ENCODE measurements at regions of chr6 and their contacts with region 1.

Region 1: DNA sequence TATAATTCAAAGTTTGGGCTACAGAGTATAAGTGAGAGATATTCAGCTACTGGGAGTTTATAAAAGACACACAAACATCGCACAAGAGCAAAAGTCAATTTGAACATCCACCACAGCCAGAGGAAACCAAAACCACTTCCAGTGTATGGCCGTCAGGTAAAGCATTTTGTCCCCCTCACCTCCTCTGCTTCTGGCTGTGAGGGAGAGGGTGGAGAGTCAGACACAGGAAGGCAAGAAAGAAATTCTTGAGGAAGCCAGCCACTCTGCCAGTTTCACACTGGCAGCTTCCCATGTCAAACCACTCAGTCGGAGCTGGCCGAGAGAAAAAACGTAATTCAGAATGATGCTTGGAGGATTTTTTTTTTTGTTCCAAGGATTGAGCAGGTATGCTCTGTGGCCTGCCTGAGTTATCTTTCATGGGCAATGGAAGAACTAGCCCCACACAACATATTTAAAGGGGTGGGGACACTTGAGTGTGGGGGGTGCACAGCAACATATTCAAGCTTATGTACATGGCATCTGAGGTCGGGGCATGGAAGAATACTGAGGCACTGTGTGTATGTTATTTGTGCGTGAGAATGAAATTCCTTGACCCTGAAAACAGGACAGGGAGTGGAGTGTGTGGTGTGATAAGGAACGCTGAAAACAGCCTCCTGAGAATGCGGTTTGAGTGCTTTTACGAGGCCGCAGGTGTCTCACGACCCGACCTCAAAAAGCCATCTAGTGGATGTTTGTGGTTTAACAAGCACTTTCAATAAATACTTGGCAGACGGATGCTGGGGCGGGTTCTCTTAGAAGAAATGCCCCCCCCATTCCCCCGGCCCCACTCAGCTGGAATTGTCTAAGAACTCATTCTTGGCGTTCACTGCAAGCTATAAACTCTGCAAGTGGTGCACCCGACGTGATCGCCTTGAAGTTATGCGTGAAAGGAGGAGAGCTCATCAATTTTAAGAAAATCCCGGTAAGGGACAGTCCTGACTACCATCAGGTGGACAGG is 27.5 kb upstream of the ZBTB22 start:
- DNase-seq: peak; percentile 24 to 36
- ATAC-seq: peak in 1 of 2 donors; percentile 64
- H3K4me3 ChIP-seq: no peak overlapping the region
- H3K27ac ChIP-seq: no peak overlapping the region
- H3K4me1 ChIP-seq: peaks cover 0 to 3% of the 10 kb centered on the region in 2 donors
- H3K27me3 ChIP-seq: no peaks in the 10 kb centered on the region
- CTCF ChIP-seq: peak; percentile 33 to 64 (median 56)
- POLR2A ChIP-seq: no peak

Region 2: DNA sequence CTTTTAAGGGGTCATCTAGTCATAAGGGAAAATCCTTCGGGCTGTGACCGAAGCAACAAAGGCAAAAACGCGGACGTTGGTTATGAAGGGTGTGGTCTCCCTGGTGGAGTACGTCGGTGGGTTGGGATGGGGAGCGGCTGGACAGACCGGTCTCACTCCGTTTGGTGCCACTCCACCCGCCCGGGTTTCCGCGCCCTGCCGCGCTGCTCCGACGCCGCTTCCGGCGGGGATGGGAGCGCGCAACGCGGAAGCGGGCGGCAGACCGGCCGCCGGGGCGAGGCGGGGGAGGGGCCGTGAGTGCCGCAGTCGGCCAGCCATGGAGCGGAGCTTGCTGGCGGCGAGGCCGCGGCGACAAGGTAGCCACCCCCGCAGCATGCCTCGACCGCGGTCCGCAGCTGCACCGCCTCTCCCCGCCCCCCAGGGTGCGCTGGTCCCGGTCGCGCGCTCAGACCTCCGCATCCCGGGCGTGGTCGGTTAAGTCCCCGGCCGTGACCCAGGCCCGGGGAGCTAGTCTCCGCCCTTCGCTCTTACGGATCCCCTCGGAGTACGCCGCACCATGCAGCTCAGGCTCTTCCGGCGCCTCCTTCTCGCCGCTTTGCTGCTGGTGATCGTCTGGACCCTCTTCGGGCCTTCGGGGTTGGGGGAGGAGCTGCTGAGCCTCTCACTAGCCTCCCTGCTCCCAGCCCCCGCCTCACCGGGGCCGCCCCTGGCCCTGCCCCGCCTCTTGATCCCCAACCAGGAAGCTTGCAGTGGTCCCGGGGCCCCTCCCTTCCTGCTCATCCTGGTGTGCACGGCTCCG is 67.9 kb before region 1 on chr6 and contains the start of gene B3GALT4:
- in situ Hi-C with region 1: no loop called
- intact Hi-C with region 1: loop called (anchors 1 kb)
- DNase-seq: peak in 1 of 2 donors; percentile 61
- ATAC-seq: peak; percentile 39 to 53
- H3K4me3 ChIP-seq: peak within 1 kb of the TSS; percentile 56 to 64 (median 62)
- H3K27ac ChIP-seq: peak within 1 kb of the TSS; percentile 70 to 82 (median 76)
- H3K4me1 ChIP-seq: peaks cover 47 to 68% of the 10 kb centered on the region in 2 donors
- H3K27me3 ChIP-seq: no peaks in the 10 kb centered on the region
- CTCF ChIP-seq: peak; percentile 53 to 69 (median 60)
- POLR2A ChIP-seq: peak in 1 of 2 donors; percentile 24
- total RNA-seq, gene B3GALT4: 1.0 to 2.0 (median 1.7) TPM

Region 3: DNA sequence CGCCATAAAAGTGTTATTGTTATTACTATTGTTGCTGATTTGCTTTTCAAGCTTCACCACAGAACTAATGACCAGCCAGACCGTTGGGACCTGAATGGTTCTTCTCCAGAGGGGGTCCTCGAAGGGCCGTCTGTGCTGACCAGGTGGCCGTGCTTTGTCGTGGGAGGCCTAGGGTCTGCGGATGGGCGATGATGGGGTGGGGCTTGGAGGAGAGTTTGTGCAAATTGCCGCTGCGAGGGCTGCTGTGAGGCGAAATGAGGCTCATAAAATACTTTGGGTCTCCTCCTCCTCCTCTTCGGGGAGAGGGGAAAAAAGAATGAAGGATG is 21.4 kb before region 1 on chr6:
- in situ Hi-C with region 1: no loop called
- intact Hi-C with region 1: loop called (anchors 1 kb)
- DNase-seq: no peak
- ATAC-seq: peak in 1 of 2 donors; percentile 1
- H3K4me3 ChIP-seq: peak overlapping the region; percentile 61 to 88 (median 78)
- H3K27ac ChIP-seq: peak overlapping the region; percentile 84 to 95 (median 90)
- H3K4me1 ChIP-seq: peaks cover 30 to 39% of the 10 kb centered on the region in 2 donors
- H3K27me3 ChIP-seq: no peaks in the 10 kb centered on the region
- CTCF ChIP-seq: no peak
- POLR2A ChIP-seq: no peak